Activated T-helper 2 cell treated with anti-CD3 and anti-CD28 coated beads, Interferon-gamma antibody, Interleukin-2, Interleukin-4, amounts not matched to agents 10 μg/mL and 5 μg/mL and 100 μg/mL, durations not matched to agents 14 hours and 24 hours and 36 hours (primary cell): ENCODE measurements at regions of chrX and their contacts with region 1.

Region 1: GRCh38 chrX:132957211-132958090 is 978 bp downstream of the HS6ST2 start:
- DNase-seq: no peak
- H3K4me3 Mint-ChIP-seq: peak overlapping the region; percentile 57
- H3K27ac Mint-ChIP-seq: no peak overlapping the region
- H3K4me1 Mint-ChIP-seq: no peaks in the 10 kb centered on the region
- H3K27me3 Mint-ChIP-seq: peaks cover 38% of the 10 kb centered on the region

Region 2: GRCh38 chrX:132740316-132741123 is 216.9 kb before region 1 on chrX:
- intact Hi-C with region 1: loop called (anchors 10 kb)
- DNase-seq: no peak
- H3K4me3 Mint-ChIP-seq: no peak overlapping the region
- H3K27ac Mint-ChIP-seq: no peak overlapping the region
- H3K4me1 Mint-ChIP-seq: peaks cover 21% of the 10 kb centered on the region
- H3K27me3 Mint-ChIP-seq: no peaks in the 10 kb centered on the region

Region 3: DNA sequence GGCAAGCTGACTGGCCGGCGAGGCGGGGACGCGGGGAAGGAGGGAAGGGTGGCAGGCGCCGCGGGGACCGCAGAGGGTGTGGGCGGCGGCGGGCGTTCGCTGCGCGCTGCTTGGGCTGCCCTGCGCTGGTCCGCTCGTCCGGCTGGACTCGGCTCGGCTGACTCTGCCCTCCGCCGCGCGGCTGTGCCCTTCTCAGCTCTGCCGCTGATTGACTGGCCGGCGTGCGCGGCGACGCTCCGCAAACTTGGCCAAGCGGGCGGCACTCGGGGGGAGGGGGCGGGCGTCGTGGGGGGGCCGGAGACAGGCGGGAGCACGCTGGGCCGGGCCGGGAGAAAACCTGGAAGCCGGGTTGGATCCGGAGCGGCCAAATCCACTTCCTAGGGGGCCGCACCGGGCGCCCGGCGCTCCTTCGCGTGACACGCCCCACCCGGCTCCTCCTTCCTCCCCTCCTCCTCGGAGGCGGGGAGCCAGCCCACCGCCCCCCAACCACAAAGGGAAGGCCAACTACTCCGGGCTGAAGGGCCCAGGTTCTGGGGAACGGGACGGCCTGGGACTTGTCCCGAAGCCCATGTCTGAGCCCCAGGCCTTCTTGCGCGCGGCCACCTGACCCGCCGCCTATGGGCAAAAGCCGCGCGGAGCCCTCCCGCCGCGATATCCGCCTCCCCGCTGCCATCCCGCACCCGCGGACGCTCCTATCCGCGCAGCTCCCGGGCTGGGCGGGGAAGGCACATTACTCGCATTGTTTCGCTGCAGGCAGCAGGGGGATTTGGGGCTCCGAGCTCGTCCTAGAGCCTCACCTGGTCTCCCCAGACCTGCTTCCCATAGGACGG is 458.0 kb after region 1 on chrX and contains the start of gene GPC4:
- intact Hi-C with region 1: loop called (anchors 10 kb)
- DNase-seq: no peak
- H3K4me3 Mint-ChIP-seq: peak within 1 kb of the TSS; percentile 47
- H3K27ac Mint-ChIP-seq: no peak within 1 kb of the TSS
- H3K4me1 Mint-ChIP-seq: peaks cover 3% of the 10 kb centered on the region
- H3K27me3 Mint-ChIP-seq: peaks cover 51% of the 10 kb centered on the region
- total RNA-seq, gene GPC4: not detected in 2 replicates

Region 4: GRCh38 chrX:133608406-133608805 is 651.0 kb after region 1 on chrX:
- intact Hi-C with region 1: no loop called
- DNase-seq: no peak
- H3K4me3 Mint-ChIP-seq: no peak overlapping the region
- H3K27ac Mint-ChIP-seq: no peak overlapping the region
- H3K4me1 Mint-ChIP-seq: no peaks in the 10 kb centered on the region
- H3K27me3 Mint-ChIP-seq: no peaks in the 10 kb centered on the region